ENCODE measurements at regions of chr11 and their contacts with region 1.

Region 1: DNA sequence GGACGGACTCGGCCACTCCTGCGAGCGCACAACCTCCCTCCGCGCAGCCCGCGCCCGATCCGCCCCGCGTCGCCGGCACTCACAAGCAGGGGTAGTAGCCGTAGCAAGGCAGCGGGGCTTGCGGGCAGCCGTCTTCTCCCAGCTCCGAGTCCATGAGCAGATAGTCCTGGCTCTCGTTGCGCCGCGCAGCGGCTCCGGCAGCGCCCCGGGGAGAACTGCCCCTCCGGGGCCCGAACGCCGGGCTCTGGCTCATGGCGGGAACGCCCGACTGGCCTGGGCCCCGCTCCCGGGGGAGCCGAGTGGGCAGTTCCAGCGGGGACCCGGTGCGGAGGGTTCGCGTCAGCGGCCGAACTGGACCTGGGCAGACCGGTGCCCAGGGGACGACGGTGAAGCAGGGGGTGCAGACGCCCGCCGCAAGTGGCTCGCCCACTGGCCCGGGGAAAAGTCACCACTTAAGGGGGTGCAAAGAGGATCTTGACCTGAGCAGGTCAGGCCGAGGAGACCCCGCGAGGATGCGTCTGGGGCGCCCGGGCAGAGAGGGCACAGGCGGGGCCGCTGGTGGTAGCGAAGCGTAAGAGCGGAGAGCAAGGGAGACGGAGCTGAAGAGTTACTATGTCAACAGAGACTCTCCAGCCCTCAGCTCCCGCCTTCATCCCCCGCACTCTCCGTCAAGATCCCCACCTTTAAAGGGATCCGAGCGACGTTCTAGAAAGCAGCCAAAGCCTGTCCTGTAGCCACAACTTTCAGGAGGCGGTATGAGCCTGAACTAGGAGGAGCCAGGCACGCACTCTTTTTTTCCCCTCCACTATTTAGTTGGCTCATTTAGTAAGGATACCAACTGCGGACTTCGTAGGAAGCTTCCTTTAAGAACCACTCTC is at the start of gene TRPC6:
- DNase-seq: peak; percentile 47
- ATAC-seq: peak; percentile 81
- H3K4me3 ChIP-seq: peak within 1 kb of the TSS; percentile 97
- H3K27ac ChIP-seq: peak within 1 kb of the TSS; percentile 42
- H3K4me1 ChIP-seq: no peaks in the 10 kb centered on the region
- H3K27me3 ChIP-seq: no peaks in the 10 kb centered on the region
- CTCF ChIP-seq: no peak
- POLR2A ChIP-seq: no peak
- RAD21 ChIP-seq: no peak
- total RNA-seq, gene TRPC6: 2.3 and 3.1 TPM in 2 replicates

Region 2: GRCh38 chr11:101456812-101457211 is 126.7 kb before region 1 on chr11:
- CTCF ChIA-PET with region 1: interaction called, 3 read pairs
- POLR2A ChIA-PET with region 1: no interaction called
- dilution Hi-C with region 1: no loop called
- in situ Hi-C with region 1: no loop called
- intact Hi-C with region 1: loop called (anchors 2 kb)
- DNase-seq: peak; percentile 52
- ATAC-seq: peak; percentile 56
- H3K4me3 ChIP-seq: no peak overlapping the region
- H3K27ac ChIP-seq: no peak overlapping the region
- H3K4me1 ChIP-seq: peaks cover 5% of the 10 kb centered on the region; the same call in 1 of the 2 replicates
- H3K27me3 ChIP-seq: no peaks in the 10 kb centered on the region
- CTCF ChIP-seq: peak; percentile 68
- POLR2A ChIP-seq: no peak
- RAD21 ChIP-seq: peak; percentile 70

Region 3: DNA sequence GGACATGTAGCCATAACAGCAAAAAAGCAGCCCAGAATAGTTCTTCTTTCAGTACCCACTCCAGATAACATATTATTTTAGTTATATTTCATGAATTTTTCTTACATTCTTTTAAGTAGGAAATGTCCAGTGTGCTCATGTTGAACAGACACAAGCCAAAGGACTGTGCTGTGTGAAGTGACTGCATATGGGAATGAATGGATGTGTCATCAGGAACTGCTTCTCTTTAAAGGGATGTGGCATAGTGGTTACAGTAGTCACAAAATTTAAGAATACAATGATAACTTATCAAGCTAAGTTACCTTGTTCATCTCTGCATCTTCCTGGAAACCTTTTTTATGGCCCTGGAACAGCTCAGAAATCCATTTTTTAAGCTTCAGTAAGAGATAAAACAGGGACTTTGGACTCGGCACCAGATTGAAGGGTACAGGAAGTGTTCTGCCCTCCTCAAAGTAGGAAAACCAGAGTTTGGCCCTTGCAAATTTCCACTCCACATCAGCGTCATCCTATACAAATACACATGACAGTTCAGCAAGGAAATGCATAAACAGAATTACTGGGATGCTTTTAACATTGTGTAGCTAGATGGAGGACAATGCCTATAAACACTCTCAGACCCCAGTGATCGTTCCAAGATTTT is 112.5 kb before region 1 on chr11:
- CTCF ChIA-PET with region 1: no interaction called
- POLR2A ChIA-PET with region 1: no interaction called
- dilution Hi-C with region 1: no loop called
- in situ Hi-C with region 1: no loop called
- intact Hi-C with region 1: loop called (anchors 5 kb)
- DNase-seq: peak; percentile 75
- ATAC-seq: peak; percentile 79
- H3K4me3 ChIP-seq: no peak overlapping the region; the same call in 1 of the 2 replicates
- H3K27ac ChIP-seq: peak overlapping the region; percentile 60
- H3K4me1 ChIP-seq: peaks cover 8% of the 10 kb centered on the region
- H3K27me3 ChIP-seq: no peaks in the 10 kb centered on the region
- CTCF ChIP-seq: no peak
- POLR2A ChIP-seq: no peak
- RAD21 ChIP-seq: no peak

Region 4: DNA sequence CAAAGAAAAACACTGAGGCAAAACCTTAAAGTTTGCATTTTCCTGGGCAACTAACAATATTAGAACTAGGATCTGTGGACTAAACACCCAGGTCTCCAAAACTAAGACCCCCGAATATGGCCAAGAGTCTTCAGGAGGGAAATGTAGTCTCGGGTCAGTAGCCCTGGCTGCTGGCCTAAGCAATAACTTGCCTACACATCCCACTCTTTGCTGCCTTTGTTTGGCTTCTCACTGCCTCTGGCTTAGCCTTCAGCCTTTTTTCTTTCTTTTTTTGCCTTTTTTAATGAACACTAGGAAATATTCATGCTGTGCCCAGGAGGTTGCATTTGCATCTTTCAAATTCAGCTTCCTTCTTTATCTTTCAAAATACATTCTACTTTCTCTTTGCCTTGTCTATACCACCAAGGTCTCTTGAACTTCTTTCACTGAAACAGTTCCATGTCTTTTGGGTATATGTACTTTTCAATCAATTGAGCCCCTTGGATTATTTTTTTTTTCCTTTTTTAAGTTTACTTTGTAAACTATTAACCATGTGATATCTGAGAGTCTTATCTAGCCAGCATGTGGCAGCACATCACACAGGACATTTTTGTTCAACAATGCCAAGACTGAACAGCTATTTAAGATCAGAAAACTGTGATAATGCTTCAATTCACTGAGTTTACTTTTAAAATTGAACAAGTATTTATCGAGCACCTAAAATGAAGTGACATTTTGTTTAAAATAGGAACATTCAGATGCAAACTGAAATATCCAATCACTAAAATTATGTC is 165.3 kb after region 1 on chr11:
- CTCF ChIA-PET with region 1: interaction called, 6 read pairs
- POLR2A ChIA-PET with region 1: no interaction called
- dilution Hi-C with region 1: no loop called
- in situ Hi-C with region 1: no loop called
- intact Hi-C with region 1: loop called (anchors 5 kb)
- DNase-seq: peak; percentile 10
- ATAC-seq: peak; percentile 61
- H3K4me3 ChIP-seq: peak overlapping the region; percentile 44; the same call in 1 of the 2 replicates
- H3K27ac ChIP-seq: peak overlapping the region; percentile 80; the same call in 1 of the 2 replicates
- H3K4me1 ChIP-seq: peaks cover 6% of the 10 kb centered on the region
- H3K27me3 ChIP-seq: no peaks in the 10 kb centered on the region
- CTCF ChIP-seq: no peak
- POLR2A ChIP-seq: no peak
- RAD21 ChIP-seq: no peak

Region 5: GRCh38 chr11:101840704-101841103 is 257.2 kb after region 1 on chr11:
- CTCF ChIA-PET with region 1: no interaction called
- POLR2A ChIA-PET with region 1: no interaction called
- dilution Hi-C with region 1: no loop called
- in situ Hi-C with region 1: loop called (anchors 10 kb)
- intact Hi-C with region 1: loop called (anchors 2 kb)
- DNase-seq: peak; percentile 67
- ATAC-seq: peak; percentile 90
- H3K4me3 ChIP-seq: no peak overlapping the region
- H3K27ac ChIP-seq: no peak overlapping the region; the same call in 1 of the 2 replicates
- H3K4me1 ChIP-seq: peaks cover 2% of the 10 kb centered on the region; the same call in 1 of the 2 replicates
- H3K27me3 ChIP-seq: no peaks in the 10 kb centered on the region
- CTCF ChIP-seq: no peak
- POLR2A ChIP-seq: no peak
- RAD21 ChIP-seq: no peak

Measured in IMR-90 (cell line).